Activated CD4-positive, alpha-beta memory T cell treated with anti-CD3 and anti-CD28 coated beads for 36 hours (primary cell): ENCODE measurements at regions of chr7 and their contacts with region 1.

Region 1: GRCh38 chr7:99312316-99313203 is 13.1 kb upstream of the ARPC1A start:
- DNase-seq: peak; percentile 79
- H3K4me3 Mint-ChIP-seq: no peak overlapping the region
- H3K27ac Mint-ChIP-seq: no peak overlapping the region
- H3K4me1 Mint-ChIP-seq: peaks cover 7% of the 10 kb centered on the region
- H3K27me3 Mint-ChIP-seq: peaks cover 9% of the 10 kb centered on the region

Region 2: GRCh38 chr7:99040104-99040958 is 272.2 kb before region 1 on chr7:
- CTCF ChIA-PET with region 1: interaction called, 70 read pairs
- POLR2A ChIA-PET with region 1: no interaction called
- intact Hi-C with region 1: loop called (anchors 1 kb)
- DNase-seq: peak; percentile 67
- H3K4me3 Mint-ChIP-seq: no peak overlapping the region
- H3K27ac Mint-ChIP-seq: peak overlapping the region; percentile 55
- H3K4me1 Mint-ChIP-seq: no peaks in the 10 kb centered on the region
- H3K27me3 Mint-ChIP-seq: no peaks in the 10 kb centered on the region

Region 3: DNA sequence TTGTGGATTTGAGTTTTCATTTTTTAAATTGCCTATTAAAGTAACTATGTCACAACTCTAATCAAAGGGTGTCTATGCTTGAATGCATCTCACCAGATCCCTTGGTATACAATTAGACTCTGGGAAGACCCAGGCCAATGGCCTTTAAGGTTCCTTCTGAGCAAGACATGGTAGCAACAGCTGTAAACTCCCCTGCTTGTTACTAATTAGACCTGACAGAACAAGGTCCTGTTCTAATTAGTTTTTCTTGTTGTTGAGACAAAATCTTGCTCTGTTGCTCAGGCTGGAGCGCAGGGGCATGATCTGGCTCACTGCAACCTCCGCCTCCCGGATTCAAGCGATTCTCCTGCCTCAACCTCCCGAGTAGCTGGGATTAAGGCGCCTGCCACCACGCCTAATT is 37.1 kb before region 1 on chr7:
- CTCF ChIA-PET with region 1: interaction called, 8 read pairs
- POLR2A ChIA-PET with region 1: no interaction called
- intact Hi-C with region 1: loop called (anchors 2 kb)
- DNase-seq: no peak
- H3K4me3 Mint-ChIP-seq: no peak overlapping the region
- H3K27ac Mint-ChIP-seq: no peak overlapping the region
- H3K4me1 Mint-ChIP-seq: peaks cover 12% of the 10 kb centered on the region
- H3K27me3 Mint-ChIP-seq: no peaks in the 10 kb centered on the region

Region 4: GRCh38 chr7:99364961-99365817 is 52.6 kb after region 1 on chr7:
- CTCF ChIA-PET with region 1: no interaction called
- POLR2A ChIA-PET with region 1: no interaction called
- intact Hi-C with region 1: no loop called
- DNase-seq: peak; percentile 67
- H3K4me3 Mint-ChIP-seq: no peak overlapping the region
- H3K27ac Mint-ChIP-seq: no peak overlapping the region
- H3K4me1 Mint-ChIP-seq: peaks cover 5% of the 10 kb centered on the region
- H3K27me3 Mint-ChIP-seq: no peaks in the 10 kb centered on the region

Region 5: GRCh38 chr7:99478464-99479440 is 166.2 kb after region 1 on chr7:
- CTCF ChIA-PET with region 1: no interaction called
- POLR2A ChIA-PET with region 1: no interaction called
- intact Hi-C with region 1: no loop called
- DNase-seq: no peak
- H3K4me3 Mint-ChIP-seq: no peak overlapping the region
- H3K27ac Mint-ChIP-seq: no peak overlapping the region
- H3K4me1 Mint-ChIP-seq: peaks cover 32% of the 10 kb centered on the region
- H3K27me3 Mint-ChIP-seq: no peaks in the 10 kb centered on the region